Mammary epithelial cell (primary cell): ENCODE measurements at regions of chr6 and their contacts with region 1.

Region 1: GRCh38 chr6:131923356-131923755 is 27.8 kb downstream of the CCN2 start:
- DNase-seq: peak; percentile 53
- H3K4me3 ChIP-seq: no peak overlapping the region
- H3K27ac ChIP-seq: no peak overlapping the region
- H3K4me1 ChIP-seq: peaks cover 9% of the 10 kb centered on the region
- H3K27me3 ChIP-seq: no peaks in the 10 kb centered on the region
- CTCF ChIP-seq: peak; percentile 69 to 75

Region 2: GRCh38 chr6:131949909-131950766 is 26.8 kb after region 1 on chr6:
- CTCF ChIA-PET with region 1: interaction called, 5 read pairs
- dilution Hi-C with region 1: no loop called
- in situ Hi-C with region 1: no loop called
- intact Hi-C with region 1: loop called (anchors 1 kb)
- DNase-seq: peak; percentile 85
- H3K4me3 ChIP-seq: peak overlapping the region; percentile 42 to 77 (median 59)
- H3K27ac ChIP-seq: peak overlapping the region; percentile 27
- H3K4me1 ChIP-seq: peaks cover 46% of the 10 kb centered on the region
- H3K27me3 ChIP-seq: no peaks in the 10 kb centered on the region
- CTCF ChIP-seq: peak; percentile 31 to 66

Region 3: DNA sequence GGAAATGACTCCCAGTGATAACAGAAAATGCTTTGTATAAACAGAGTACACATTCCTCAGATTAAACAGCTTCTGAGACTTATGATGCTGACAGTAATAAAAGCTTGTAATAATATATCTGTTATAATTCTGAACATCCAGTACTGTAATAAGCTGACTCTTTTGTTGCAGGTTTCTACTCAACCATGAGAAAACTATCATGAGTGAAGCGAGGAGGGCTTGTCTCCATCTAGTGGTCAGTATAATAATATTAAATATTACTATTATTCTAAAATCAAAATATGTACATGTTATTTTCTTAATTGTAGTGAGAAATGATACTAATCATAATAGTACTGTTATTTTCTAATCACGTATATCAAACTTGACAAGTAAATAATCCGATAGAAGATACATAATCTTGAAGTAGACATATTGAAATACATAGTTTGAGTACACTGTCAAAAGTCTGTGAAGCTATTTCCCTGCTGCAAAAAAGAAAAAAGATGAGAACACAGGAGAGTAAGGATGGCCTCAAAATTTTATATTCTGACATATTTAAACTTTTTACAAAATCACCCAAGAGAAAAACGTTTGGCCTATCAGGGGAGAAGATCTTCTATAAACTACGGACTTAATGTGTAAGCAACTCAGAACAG is 294.8 kb after region 1 on chr6:
- CTCF ChIA-PET with region 1: no interaction called
- dilution Hi-C with region 1: no loop called
- in situ Hi-C with region 1: loop called (anchors 10 to 25 kb)
- intact Hi-C with region 1: loop called (anchors 1 kb)
- DNase-seq: no peak
- H3K4me3 ChIP-seq: no peak overlapping the region
- H3K27ac ChIP-seq: no peak overlapping the region
- H3K4me1 ChIP-seq: no peaks in the 10 kb centered on the region
- H3K27me3 ChIP-seq: no peaks in the 10 kb centered on the region
- CTCF ChIP-seq: peak; percentile 32 to 56

Region 4: GRCh38 chr6:132279592-132280139 is 356.3 kb after region 1 on chr6:
- CTCF ChIA-PET with region 1: no interaction called
- dilution Hi-C with region 1: no loop called
- in situ Hi-C with region 1: no loop called
- intact Hi-C with region 1: loop called (anchors 5 kb)
- DNase-seq: peak; percentile 53
- H3K4me3 ChIP-seq: peak overlapping the region; percentile 35 to 56 (median 53)
- H3K27ac ChIP-seq: no peak overlapping the region
- H3K4me1 ChIP-seq: no peaks in the 10 kb centered on the region
- H3K27me3 ChIP-seq: no peaks in the 10 kb centered on the region
- CTCF ChIP-seq: peak; percentile 76 to 81

Region 5: GRCh38 chr6:132391391-132392271 is 468.3 kb after region 1 on chr6:
- CTCF ChIA-PET with region 1: no interaction called
- dilution Hi-C with region 1: no loop called
- in situ Hi-C with region 1: no loop called
- intact Hi-C with region 1: loop called (anchors 5 kb)
- DNase-seq: peak; percentile 81
- H3K4me3 ChIP-seq: no peak overlapping the region
- H3K27ac ChIP-seq: peak overlapping the region; percentile 63
- H3K4me1 ChIP-seq: peaks cover 17% of the 10 kb centered on the region
- H3K27me3 ChIP-seq: no peaks in the 10 kb centered on the region
- CTCF ChIP-seq: no peak